ENCODE measurements at regions of chr12 and their contacts with region 1.

Region 1: GRCh38 chr12:47079468-47079980 is at the starts of genes AMIGO2 and PCED1B:
- DNase-seq: peak; percentile 78 to 85
- H3K4me3 ChIP-seq: peak within 1 kb of the TSS; percentile 72
- H3K4me3 Mint-ChIP-seq: peak within 1 kb of the TSS; percentile 82
- H3K27ac Mint-ChIP-seq: peak within 1 kb of the TSS; percentile 27
- H3K4me1 ChIP-seq: peaks cover 8% of the 10 kb centered on the region; the same call in 1 of the 2 replicates
- H3K4me1 Mint-ChIP-seq: peaks cover 35% of the 10 kb centered on the region
- H3K27me3 ChIP-seq: peaks cover 1% of the 10 kb centered on the region; the same call in 1 of the 2 replicates
- H3K27me3 Mint-ChIP-seq: peaks cover 7% of the 10 kb centered on the region
- CTCF ChIP-seq: peak in 1 of 2 experiments; percentile 66
- total RNA-seq, gene AMIGO2: 1.6 and 1.9 TPM in 2 replicates
- total RNA-seq, gene PCED1B: 7.0 and 7.8 TPM in 2 replicates

Region 2: GRCh38 chr12:47038270-47038748 is 41.2 kb before region 1 on chr12:
- CTCF ChIA-PET with region 1: no interaction called
- POLR2A ChIA-PET with region 1: no interaction called
- intact Hi-C with region 1: loop called (anchors 1 kb)
- DNase-seq: peak in 1 of 2 experiments; percentile 63
- H3K4me3 ChIP-seq: no peak overlapping the region
- H3K4me3 Mint-ChIP-seq: peak overlapping the region; percentile 53
- H3K27ac Mint-ChIP-seq: peak overlapping the region; percentile 80
- H3K4me1 ChIP-seq: peaks cover 27% of the 10 kb centered on the region
- H3K4me1 Mint-ChIP-seq: peaks cover 51% of the 10 kb centered on the region
- H3K27me3 ChIP-seq: no peaks in the 10 kb centered on the region
- H3K27me3 Mint-ChIP-seq: no peaks in the 10 kb centered on the region
- CTCF ChIP-seq: no peak

Region 3: GRCh38 chr12:47139000-47139681 is 59.6 kb after region 1 on chr12:
- CTCF ChIA-PET with region 1: no interaction called
- POLR2A ChIA-PET with region 1: no interaction called
- intact Hi-C with region 1: no loop called
- DNase-seq: no peak
- H3K4me3 ChIP-seq: no peak overlapping the region
- H3K4me3 Mint-ChIP-seq: no peak overlapping the region
- H3K27ac Mint-ChIP-seq: no peak overlapping the region
- H3K4me1 ChIP-seq: no peaks in the 10 kb centered on the region
- H3K4me1 Mint-ChIP-seq: peaks cover 3% of the 10 kb centered on the region
- H3K27me3 ChIP-seq: no peaks in the 10 kb centered on the region
- H3K27me3 Mint-ChIP-seq: no peaks in the 10 kb centered on the region
- CTCF ChIP-seq: no peak

Region 4: GRCh38 chr12:47223848-47224213 is 144.3 kb after region 1 on chr12:
- CTCF ChIA-PET with region 1: no interaction called
- POLR2A ChIA-PET with region 1: no interaction called
- intact Hi-C with region 1: loop called (anchors 1 kb)
- DNase-seq: peak; percentile 59 to 67
- H3K4me3 ChIP-seq: no peak overlapping the region
- H3K4me3 Mint-ChIP-seq: peak overlapping the region; percentile 47
- H3K27ac Mint-ChIP-seq: peak overlapping the region; percentile 66
- H3K4me1 ChIP-seq: peaks cover 69% of the 10 kb centered on the region
- H3K4me1 Mint-ChIP-seq: peaks cover 42% of the 10 kb centered on the region
- H3K27me3 ChIP-seq: no peaks in the 10 kb centered on the region
- H3K27me3 Mint-ChIP-seq: no peaks in the 10 kb centered on the region
- CTCF ChIP-seq: peak in 1 of 2 experiments; percentile 7

Region 5: DNA sequence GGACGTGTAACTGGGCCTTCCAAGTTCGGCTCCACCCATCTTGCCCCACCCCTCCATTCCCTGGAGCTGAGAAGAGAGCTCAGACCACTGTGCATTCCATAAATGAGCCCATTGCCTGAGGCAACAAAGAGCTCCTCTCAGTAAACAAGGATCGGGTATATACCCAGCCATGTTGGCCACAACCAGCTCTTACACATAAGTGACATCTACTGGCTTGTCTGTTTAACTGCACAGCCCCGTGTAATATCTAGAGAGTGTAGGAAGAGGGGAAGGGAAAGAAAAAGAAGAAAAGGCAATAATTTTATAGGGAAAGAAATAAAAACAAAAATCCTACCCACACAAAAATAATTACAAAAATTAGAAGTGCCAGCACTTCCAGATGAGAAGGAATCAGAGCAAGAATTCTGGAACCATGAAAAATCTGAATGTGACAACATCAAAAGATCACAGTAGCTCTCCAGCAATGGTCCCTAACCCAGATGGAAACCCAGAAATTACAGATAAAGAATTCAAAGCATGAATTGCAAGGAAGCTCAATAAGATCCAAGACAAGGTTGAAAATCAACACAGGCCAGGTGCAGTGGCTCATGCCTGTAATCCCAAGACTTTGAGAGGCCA is 318.2 kb after region 1 on chr12:
- CTCF ChIA-PET with region 1: interaction called, 4 read pairs
- POLR2A ChIA-PET with region 1: no interaction called
- intact Hi-C with region 1: loop called (anchors 2 kb)
- DNase-seq: peak; percentile 66 to 74
- H3K4me3 ChIP-seq: no peak overlapping the region
- H3K4me3 Mint-ChIP-seq: no peak overlapping the region
- H3K27ac Mint-ChIP-seq: no peak overlapping the region
- H3K4me1 ChIP-seq: peaks cover 9% of the 10 kb centered on the region; the same call in 1 of the 2 replicates
- H3K4me1 Mint-ChIP-seq: no peaks in the 10 kb centered on the region
- H3K27me3 ChIP-seq: no peaks in the 10 kb centered on the region
- H3K27me3 Mint-ChIP-seq: no peaks in the 10 kb centered on the region
- CTCF ChIP-seq: peak; percentile 43 to 51